Endothelial cell of umbilical vein (primary cell): ENCODE measurements at regions of chrX and their contacts with region 1.

Region 1: GRCh38 chrX:109856974-109857373 is 123.9 kb upstream of the ACSL4 start:
- DNase-seq: peak; percentile 66
- H3K4me3 ChIP-seq: no peak overlapping the region
- H3K27ac ChIP-seq: peak overlapping the region; percentile 75
- H3K4me1 ChIP-seq: peaks cover 17% of the 10 kb centered on the region
- H3K27me3 ChIP-seq: no peaks in the 10 kb centered on the region
- CTCF ChIP-seq: peak; percentile 38 to 43
- POLR2A ChIP-seq: no peak

Region 2: DNA sequence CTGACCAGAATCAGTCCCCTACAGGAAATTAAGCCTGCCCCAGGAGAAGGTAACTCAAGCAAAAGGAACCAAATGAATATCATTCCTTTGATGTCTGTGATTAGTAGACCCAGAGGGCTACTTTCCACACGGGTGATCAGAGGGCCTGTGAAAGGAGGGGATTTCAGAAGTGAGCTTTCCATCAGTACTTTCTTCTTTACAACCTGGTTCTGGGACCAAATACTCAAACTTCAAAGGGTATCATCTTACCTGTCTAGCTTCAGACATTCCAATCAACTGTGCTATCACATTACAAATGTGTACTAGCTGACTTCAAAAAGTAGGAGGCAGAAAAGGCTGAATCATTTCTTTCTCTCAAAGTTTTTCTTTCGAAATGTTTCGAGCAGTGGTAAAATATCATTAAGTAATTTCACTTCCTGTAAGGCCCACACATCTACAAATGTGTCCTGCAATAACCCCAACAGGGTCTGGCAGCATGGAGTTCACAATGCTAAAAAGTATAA is 147.8 kb before region 1 on chrX:
- CTCF ChIA-PET with region 1: interaction called, 241 read pairs
- POLR2A ChIA-PET with region 1: interaction called, 3 read pairs
- dilution Hi-C with region 1: no loop called
- intact Hi-C with region 1: loop called (anchors 1 kb)
- DNase-seq: peak; percentile 6
- H3K4me3 ChIP-seq: no peak overlapping the region
- H3K27ac ChIP-seq: peak overlapping the region; percentile 5
- H3K4me1 ChIP-seq: peaks cover 12% of the 10 kb centered on the region
- H3K27me3 ChIP-seq: no peaks in the 10 kb centered on the region
- CTCF ChIP-seq: no peak
- POLR2A ChIP-seq: no peak

Region 3: GRCh38 chrX:109720947-109721346 is 136.0 kb before region 1 on chrX:
- CTCF ChIA-PET with region 1: interaction called, 241 read pairs
- POLR2A ChIA-PET with region 1: interaction called, 3 read pairs
- dilution Hi-C with region 1: no loop called
- intact Hi-C with region 1: no loop called
- DNase-seq: no peak
- H3K4me3 ChIP-seq: no peak overlapping the region
- H3K27ac ChIP-seq: no peak overlapping the region
- H3K4me1 ChIP-seq: peaks cover 6% of the 10 kb centered on the region
- H3K27me3 ChIP-seq: no peaks in the 10 kb centered on the region
- CTCF ChIP-seq: no peak
- POLR2A ChIP-seq: no peak

Region 4: GRCh38 chrX:109732780-109733657 is 124.0 kb before region 1 on chrX and contains the start of gene ACSL4:
- CTCF ChIA-PET with region 1: interaction called, 42 read pairs
- POLR2A ChIA-PET with region 1: interaction called, 5 read pairs
- dilution Hi-C with region 1: no loop called
- intact Hi-C with region 1: loop called (anchors 5 kb)
- DNase-seq: peak; percentile 82
- H3K4me3 ChIP-seq: peak within 1 kb of the TSS; percentile 58 to 86 (median 70)
- H3K27ac ChIP-seq: peak within 1 kb of the TSS; percentile 89
- H3K4me1 ChIP-seq: peaks cover 26% of the 10 kb centered on the region
- H3K27me3 ChIP-seq: no peaks in the 10 kb centered on the region
- CTCF ChIP-seq: no peak
- POLR2A ChIP-seq: peak; percentile 83
- total RNA-seq, gene ACSL4: 85.5 and 88.9 TPM in 2 replicates

Region 5: GRCh38 chrX:109785053-109785452 is 71.9 kb before region 1 on chrX:
- CTCF ChIA-PET with region 1: interaction called, 11 read pairs
- POLR2A ChIA-PET with region 1: no interaction called
- dilution Hi-C with region 1: no loop called
- intact Hi-C with region 1: no loop called
- DNase-seq: no peak
- H3K4me3 ChIP-seq: no peak overlapping the region
- H3K27ac ChIP-seq: no peak overlapping the region
- H3K4me1 ChIP-seq: no peaks in the 10 kb centered on the region
- H3K27me3 ChIP-seq: no peaks in the 10 kb centered on the region
- CTCF ChIP-seq: no peak
- POLR2A ChIP-seq: no peak

Region 6: GRCh38 chrX:109826954-109827708 is 29.8 kb before region 1 on chrX:
- CTCF ChIA-PET with region 1: interaction called, 11 read pairs
- POLR2A ChIA-PET with region 1: interaction called, 3 read pairs
- dilution Hi-C with region 1: no loop called
- intact Hi-C with region 1: no loop called
- DNase-seq: no peak
- H3K4me3 ChIP-seq: no peak overlapping the region
- H3K27ac ChIP-seq: no peak overlapping the region
- H3K4me1 ChIP-seq: peaks cover 12% of the 10 kb centered on the region
- H3K27me3 ChIP-seq: no peaks in the 10 kb centered on the region
- CTCF ChIP-seq: no peak
- POLR2A ChIP-seq: no peak

Region 7: DNA sequence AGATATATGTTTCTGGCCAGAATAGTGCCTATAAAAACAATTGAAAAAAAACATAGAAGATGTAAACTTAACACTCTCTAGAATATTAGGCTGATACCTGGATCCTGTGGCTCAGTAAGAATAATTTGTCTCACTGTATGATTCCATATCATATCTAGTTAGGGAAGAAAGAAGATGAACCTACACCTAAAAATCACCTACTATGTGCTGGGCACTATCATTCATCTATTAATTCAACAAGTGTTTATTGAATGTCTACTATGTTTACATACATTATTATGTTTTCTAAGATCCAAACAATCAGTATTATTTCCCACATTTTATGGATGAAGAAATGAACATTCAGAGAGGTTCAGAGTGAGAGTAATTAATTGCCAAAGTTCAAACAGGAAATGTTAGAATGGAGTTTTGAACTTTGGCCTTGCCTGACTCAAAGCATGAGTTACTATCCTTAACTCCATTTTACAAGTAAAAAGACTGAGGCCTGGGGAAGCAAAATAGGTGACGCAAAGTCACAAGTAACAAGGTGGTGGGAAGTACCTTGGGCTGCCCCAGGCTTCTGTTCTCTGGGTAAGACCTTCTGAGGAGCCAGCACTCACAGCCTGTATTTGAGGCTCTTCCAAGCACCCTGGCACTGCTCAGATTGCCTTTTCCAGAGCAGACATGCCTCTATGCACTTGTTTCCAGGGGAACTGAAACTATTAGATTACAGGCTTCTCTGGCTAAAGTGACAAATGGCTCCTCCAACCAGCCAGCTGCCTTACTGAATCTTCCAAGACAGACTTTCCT is 12.8 kb before region 1 on chrX:
- CTCF ChIA-PET with region 1: interaction called, 16 read pairs
- POLR2A ChIA-PET with region 1: no interaction called
- dilution Hi-C with region 1: no loop called
- intact Hi-C with region 1: no loop called
- DNase-seq: no peak
- H3K4me3 ChIP-seq: no peak overlapping the region
- H3K27ac ChIP-seq: no peak overlapping the region
- H3K4me1 ChIP-seq: no peaks in the 10 kb centered on the region
- H3K27me3 ChIP-seq: no peaks in the 10 kb centered on the region
- CTCF ChIP-seq: no peak
- POLR2A ChIP-seq: no peak